ENCODE measurements at regions of chr12 and their contacts with region 1.

Region 1: GRCh38 chr12:121888478-121889266 is at the start of gene PSMD9:
- DNase-seq: peak; percentile 96 to 99 (median 98)
- ATAC-seq: peak; percentile 98
- H3K4me3 ChIP-seq: peak within 1 kb of the TSS; percentile 74
- H3K4me3 Mint-ChIP-seq: peak within 1 kb of the TSS; percentile 85 to 100 (median 98)
- H3K27ac ChIP-seq: peak within 1 kb of the TSS; percentile 98
- H3K27ac Mint-ChIP-seq: peak within 1 kb of the TSS; percentile 92 to 100 (median 99)
- H3K4me1 ChIP-seq: peaks cover 19 to 21% of the 10 kb centered on the region in 2 donors
- H3K4me1 Mint-ChIP-seq: peaks cover 18 to 50% (median 40%) of the 10 kb centered on the region in 7 donors
- H3K27me3 ChIP-seq: no peaks in the 10 kb centered on the region
- H3K27me3 Mint-ChIP-seq: peaks cover 0 to 4% (median 0%) of the 10 kb centered on the region in 5 donors
- total RNA-seq, gene PSMD9: 36.7 to 55.2 (median 46.9) TPM

Region 2: GRCh38 chr12:121467115-121467793 is 421.4 kb before region 1 on chr12:
- CTCF ChIA-PET with region 1: no interaction called
- POLR2A ChIA-PET with region 1: no interaction called
- intact Hi-C with region 1: loop called (anchors 1 kb)
- DNase-seq: peak; percentile 79 to 93 (median 86)
- ATAC-seq: peak; percentile 92
- H3K4me3 ChIP-seq: peak overlapping the region; percentile 44
- H3K4me3 Mint-ChIP-seq: peak overlapping the region in 6 of 10 donors; percentile 45 to 90 (median 59)
- H3K27ac ChIP-seq: peak overlapping the region; percentile 73
- H3K27ac Mint-ChIP-seq: no peak overlapping the region
- H3K4me1 ChIP-seq: peaks cover 7 to 17% of the 10 kb centered on the region in 2 donors
- H3K4me1 Mint-ChIP-seq: peaks cover 18 to 34% (median 30%) of the 10 kb centered on the region in 7 donors
- H3K27me3 ChIP-seq: no peaks in the 10 kb centered on the region
- H3K27me3 Mint-ChIP-seq: peaks cover 0 to 3% (median 0%) of the 10 kb centered on the region in 5 donors

Region 3: DNA sequence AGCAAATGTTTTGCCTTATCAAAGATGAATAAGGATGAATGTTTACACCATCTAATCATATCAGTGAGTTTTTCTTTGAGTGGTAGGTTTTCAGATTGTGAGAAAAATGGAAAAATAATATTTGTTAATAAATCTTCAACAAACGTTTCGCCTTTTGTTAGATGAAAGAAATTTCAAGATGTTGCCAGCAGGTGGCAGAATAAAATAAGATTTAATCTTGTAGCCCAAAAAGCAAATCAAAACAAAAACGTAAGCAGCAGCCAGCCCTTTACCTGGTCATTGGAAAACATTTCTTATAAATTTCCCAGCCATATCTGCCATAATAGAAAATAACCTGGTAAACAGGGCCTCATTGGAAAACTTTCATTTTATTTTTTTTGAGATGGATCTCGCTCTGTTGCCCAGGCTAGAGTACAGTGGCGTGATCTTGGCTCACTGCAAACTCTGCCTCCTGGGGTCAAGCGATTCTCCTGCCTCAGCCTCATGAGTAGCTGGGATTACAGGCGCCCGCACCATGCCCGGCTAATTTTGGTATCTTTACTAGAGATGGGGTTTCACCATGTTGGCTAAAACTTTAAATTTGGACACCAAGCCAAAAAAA is 191.5 kb before region 1 on chr12:
- CTCF ChIA-PET with region 1: interaction called, 3 read pairs
- POLR2A ChIA-PET with region 1: no interaction called
- intact Hi-C with region 1: loop called in 1 of 2 experiments (anchors 1 kb)
- DNase-seq: peak in 7 of 9 donors; percentile 37 to 72 (median 63)
- ATAC-seq: no peak
- H3K4me3 ChIP-seq: no peak overlapping the region
- H3K4me3 Mint-ChIP-seq: no peak overlapping the region
- H3K27ac ChIP-seq: no peak overlapping the region
- H3K27ac Mint-ChIP-seq: peak overlapping the region in 4 of 9 donors; percentile 5 to 41 (median 28)
- H3K4me1 ChIP-seq: no peaks in the 10 kb centered on the region
- H3K4me1 Mint-ChIP-seq: peaks cover 0 to 5% (median 0%) of the 10 kb centered on the region in 7 donors
- H3K27me3 ChIP-seq: no peaks in the 10 kb centered on the region
- H3K27me3 Mint-ChIP-seq: peaks cover 0 to 7% (median 0%) of the 10 kb centered on the region in 5 donors

Region 4: DNA sequence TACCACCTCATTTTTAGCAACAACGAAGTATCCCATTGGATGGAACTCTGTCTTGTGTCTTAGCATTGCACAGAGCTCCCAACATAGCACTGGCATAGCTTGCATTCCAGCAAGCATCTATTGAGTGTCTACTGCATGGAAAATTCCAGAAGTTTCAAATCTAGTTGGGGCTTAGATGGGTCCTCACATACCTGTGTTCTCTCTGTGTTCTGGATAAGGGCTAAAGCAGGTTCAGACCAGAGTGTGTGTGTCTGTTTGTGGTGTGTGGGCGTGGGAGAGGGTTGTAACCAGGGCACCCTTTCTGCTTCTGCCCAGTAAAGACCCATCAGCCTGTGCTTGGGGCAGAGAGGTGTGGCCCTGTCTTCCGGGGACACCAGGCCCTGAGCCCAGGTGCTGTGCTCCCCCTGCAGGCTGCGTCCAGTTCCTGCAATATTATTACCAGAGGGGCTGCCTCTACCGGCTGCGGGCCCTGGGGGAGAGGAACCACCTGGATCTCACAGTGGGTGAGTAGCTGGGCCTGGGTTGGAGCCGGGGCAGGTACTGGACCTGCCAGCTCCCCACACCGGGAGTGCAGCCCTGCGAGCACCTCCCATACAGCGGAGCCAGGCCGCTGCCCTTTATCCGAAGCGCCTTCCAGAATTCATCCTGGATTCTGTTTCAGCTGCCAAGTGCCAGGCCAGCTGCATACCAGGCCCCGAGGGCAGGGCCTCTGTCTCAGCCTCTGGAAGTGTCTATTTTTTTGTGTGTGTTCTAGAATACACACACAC is 115.5 kb before region 1 on chr12:
- CTCF ChIA-PET with region 1: interaction called, 3 read pairs
- POLR2A ChIA-PET with region 1: interaction called, 4 read pairs
- intact Hi-C with region 1: loop called in 1 of 2 experiments (anchors 1 kb)
- DNase-seq: peak; percentile 64 to 79 (median 75)
- ATAC-seq: peak; percentile 91
- H3K4me3 ChIP-seq: no peak overlapping the region
- H3K4me3 Mint-ChIP-seq: no peak overlapping the region
- H3K27ac ChIP-seq: no peak overlapping the region
- H3K27ac Mint-ChIP-seq: peak overlapping the region in 8 of 9 donors; percentile 15 to 88 (median 59)
- H3K4me1 ChIP-seq: peaks cover 14 to 16% of the 10 kb centered on the region in 2 donors
- H3K4me1 Mint-ChIP-seq: peaks cover 3 to 15% (median 10%) of the 10 kb centered on the region in 7 donors
- H3K27me3 ChIP-seq: no peaks in the 10 kb centered on the region
- H3K27me3 Mint-ChIP-seq: no peaks in the 10 kb centered on the region

Region 5: DNA sequence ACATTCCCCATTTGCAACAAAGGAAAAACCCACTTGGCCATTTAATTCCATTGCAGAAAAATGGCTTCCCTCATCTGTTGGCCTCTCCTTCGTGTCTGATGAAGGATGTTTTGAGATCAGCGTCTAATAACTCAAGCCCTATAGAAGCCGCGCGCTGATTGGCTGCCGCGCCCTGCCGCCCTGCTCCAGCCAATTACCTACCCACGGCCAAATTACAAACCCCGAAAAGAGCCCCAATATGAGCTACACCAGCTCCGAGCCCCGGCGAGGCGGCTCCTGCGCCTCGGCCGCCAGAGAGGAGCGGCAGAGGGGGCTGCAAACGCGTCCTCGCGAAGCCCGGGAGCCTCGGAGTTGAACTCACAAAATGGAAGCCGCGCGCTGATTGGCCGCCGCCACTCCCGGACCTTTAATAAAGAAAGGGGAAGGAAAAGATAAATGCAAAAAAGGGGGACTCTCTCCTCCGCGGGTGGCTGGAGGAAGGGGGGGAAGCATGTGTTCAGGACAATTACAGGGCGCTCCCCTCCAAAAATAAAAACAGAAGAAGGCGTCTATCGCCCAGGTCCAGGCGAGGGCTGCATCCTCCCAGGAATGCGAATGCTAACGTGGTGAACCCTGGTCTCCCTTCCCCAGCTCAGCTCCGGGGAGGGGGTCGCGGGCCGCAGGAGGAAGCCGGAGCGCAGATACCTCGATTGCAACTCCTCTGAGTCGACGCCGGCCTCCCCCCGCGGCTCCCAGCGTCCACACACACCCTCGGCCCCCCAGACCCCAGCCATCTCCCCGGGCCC is 85.6 kb before region 1 on chr12:
- CTCF ChIA-PET with region 1: no interaction called
- POLR2A ChIA-PET with region 1: interaction called, 25 read pairs
- intact Hi-C with region 1: loop called in 1 of 2 experiments (anchors 1 kb)
- DNase-seq: peak; percentile 84 to 94 (median 92)
- ATAC-seq: peak; percentile 65
- H3K4me3 ChIP-seq: peak overlapping the region; percentile 94
- H3K4me3 Mint-ChIP-seq: peak overlapping the region; percentile 89 to 99 (median 96)
- H3K27ac ChIP-seq: peak overlapping the region; percentile 96
- H3K27ac Mint-ChIP-seq: peak overlapping the region; percentile 98 to 100 (median 99)
- H3K4me1 ChIP-seq: peaks cover 21 to 28% of the 10 kb centered on the region in 2 donors
- H3K4me1 Mint-ChIP-seq: peaks cover 25 to 37% (median 29%) of the 10 kb centered on the region in 7 donors
- H3K27me3 ChIP-seq: no peaks in the 10 kb centered on the region
- H3K27me3 Mint-ChIP-seq: no peaks in the 10 kb centered on the region

Region 6: GRCh38 chr12:121917979-121918678 is 29.5 kb after region 1 on chr12 and contains the start of gene CFAP251:
- CTCF ChIA-PET with region 1: no interaction called
- POLR2A ChIA-PET with region 1: interaction called, 3 read pairs
- intact Hi-C with region 1: loop called (anchors 1 kb)
- DNase-seq: peak; percentile 88 to 98 (median 94)
- ATAC-seq: peak; percentile 99
- H3K4me3 ChIP-seq: peak within 1 kb of the TSS; percentile 58
- H3K4me3 Mint-ChIP-seq: peak within 1 kb of the TSS; percentile 68 to 94 (median 86)
- H3K27ac ChIP-seq: peak within 1 kb of the TSS; percentile 71
- H3K27ac Mint-ChIP-seq: peak within 1 kb of the TSS; percentile 91 to 98 (median 93)
- H3K4me1 ChIP-seq: peaks cover 4 to 10% of the 10 kb centered on the region in 2 donors
- H3K4me1 Mint-ChIP-seq: peaks cover 8 to 19% (median 13%) of the 10 kb centered on the region in 7 donors
- H3K27me3 ChIP-seq: no peaks in the 10 kb centered on the region
- H3K27me3 Mint-ChIP-seq: no peaks in the 10 kb centered on the region
- total RNA-seq, gene CFAP251: 0.38 to 1.5 (median 0.88) TPM

Region 7: DNA sequence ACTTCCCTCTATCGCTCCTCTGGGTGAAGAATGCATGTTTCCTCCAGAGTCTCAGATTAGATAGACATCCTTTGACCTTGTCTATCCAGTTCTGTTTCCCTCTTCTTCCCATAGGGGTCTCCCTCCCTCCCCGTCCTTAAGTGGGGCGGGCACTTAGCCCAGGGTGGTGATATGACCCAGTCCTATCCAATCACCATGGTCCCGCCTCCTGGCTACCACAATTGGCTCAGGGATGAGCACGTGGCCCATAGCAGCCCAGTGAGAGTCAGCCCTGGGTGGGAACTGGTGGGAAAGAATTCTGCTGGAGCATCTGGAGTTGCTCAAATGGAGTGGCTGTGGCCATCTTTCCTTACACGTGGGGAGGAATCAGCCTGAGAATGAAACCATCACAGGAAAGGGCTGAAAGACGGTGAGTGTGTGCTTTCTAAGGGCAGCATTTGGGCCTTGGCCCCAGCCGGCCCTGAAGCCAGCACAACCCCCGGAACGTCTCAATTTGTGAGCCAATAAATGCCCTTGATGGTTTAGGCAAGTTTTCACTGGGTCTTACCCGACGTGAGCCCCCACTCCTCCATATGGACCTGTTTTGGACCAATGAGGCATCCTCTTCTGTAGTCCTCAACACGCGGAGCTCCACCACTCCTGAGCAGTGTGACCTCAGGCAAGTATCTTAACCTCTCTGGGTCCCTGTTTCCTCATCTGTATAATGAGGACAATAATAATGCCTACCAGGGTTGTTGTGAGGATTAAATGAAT is 175.5 kb after region 1 on chr12:
- CTCF ChIA-PET with region 1: no interaction called
- POLR2A ChIA-PET with region 1: no interaction called
- intact Hi-C with region 1: no loop called
- DNase-seq: peak in 4 of 9 donors; percentile 13 to 37 (median 29)
- ATAC-seq: peak; percentile 80
- H3K4me3 ChIP-seq: no peak overlapping the region
- H3K4me3 Mint-ChIP-seq: no peak overlapping the region
- H3K27ac ChIP-seq: no peak overlapping the region
- H3K27ac Mint-ChIP-seq: peak overlapping the region in 2 of 9 donors; percentile 18 to 83
- H3K4me1 ChIP-seq: peaks cover 11 to 12% of the 10 kb centered on the region in 2 donors
- H3K4me1 Mint-ChIP-seq: peaks cover 19 to 29% (median 24%) of the 10 kb centered on the region in 7 donors
- H3K27me3 ChIP-seq: no peaks in the 10 kb centered on the region
- H3K27me3 Mint-ChIP-seq: peaks cover 0 to 1% (median 0%) of the 10 kb centered on the region in 5 donors

Region 8: DNA sequence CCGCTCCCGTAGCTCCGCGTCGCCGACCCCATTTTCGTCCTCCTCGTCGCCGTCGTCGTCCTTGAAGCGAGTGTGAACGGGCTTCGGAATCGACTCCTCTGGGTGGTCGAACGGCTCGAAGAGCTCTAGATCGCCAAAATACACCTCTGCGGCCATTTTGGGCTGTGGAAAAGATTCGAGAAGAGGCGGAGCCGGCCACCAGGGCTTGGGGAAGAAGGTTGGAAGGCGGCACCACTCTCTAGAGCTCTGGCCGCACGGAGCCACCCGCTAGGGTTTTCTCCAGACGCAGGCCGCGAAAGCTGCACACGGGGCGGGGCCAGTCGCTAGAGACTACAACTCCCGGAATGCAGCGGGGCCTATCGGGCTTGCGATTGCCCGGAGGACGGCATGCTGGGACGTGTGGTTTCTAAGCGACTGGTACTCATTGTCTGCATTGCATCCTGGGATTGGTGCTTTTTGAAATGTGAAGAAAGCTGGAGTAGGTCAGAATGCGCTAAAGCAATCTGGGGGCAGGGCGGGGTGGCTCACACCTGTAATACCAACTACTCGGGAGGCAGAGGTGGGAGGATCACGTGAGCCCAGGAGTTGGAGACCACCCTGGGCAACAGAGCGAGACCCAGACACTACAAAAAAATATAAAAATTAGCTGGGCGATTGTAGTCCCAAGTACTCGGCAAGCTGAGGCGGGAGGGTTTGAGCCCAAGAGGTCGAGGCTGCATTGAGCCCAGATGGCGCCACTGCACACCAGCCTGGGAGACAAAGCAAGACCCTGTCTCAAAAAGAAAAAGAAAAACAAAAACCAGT is 612.2 kb after region 1 on chr12 and contains the start of gene ZCCHC8:
- CTCF ChIA-PET with region 1: no interaction called
- POLR2A ChIA-PET with region 1: no interaction called
- intact Hi-C with region 1: loop called (anchors 1 to 2 kb)
- DNase-seq: peak; percentile 83 to 97 (median 94)
- ATAC-seq: peak; percentile 96
- H3K4me3 ChIP-seq: peak within 1 kb of the TSS; percentile 97
- H3K4me3 Mint-ChIP-seq: peak within 1 kb of the TSS; percentile 83 to 99 (median 96)
- H3K27ac ChIP-seq: peak within 1 kb of the TSS; percentile 92
- H3K27ac Mint-ChIP-seq: peak within 1 kb of the TSS; percentile 89 to 98 (median 96)
- H3K4me1 ChIP-seq: peaks cover 9 to 15% of the 10 kb centered on the region in 2 donors
- H3K4me1 Mint-ChIP-seq: peaks cover 22 to 47% (median 39%) of the 10 kb centered on the region in 7 donors
- H3K27me3 ChIP-seq: no peaks in the 10 kb centered on the region
- H3K27me3 Mint-ChIP-seq: no peaks in the 10 kb centered on the region
- total RNA-seq, gene ZCCHC8: 44.4 to 54.0 (median 46.8) TPM